CD8-positive, alpha-beta memory T cell (primary cell): ENCODE measurements at regions of chr7 and their contacts with region 1.

Region 1: DNA sequence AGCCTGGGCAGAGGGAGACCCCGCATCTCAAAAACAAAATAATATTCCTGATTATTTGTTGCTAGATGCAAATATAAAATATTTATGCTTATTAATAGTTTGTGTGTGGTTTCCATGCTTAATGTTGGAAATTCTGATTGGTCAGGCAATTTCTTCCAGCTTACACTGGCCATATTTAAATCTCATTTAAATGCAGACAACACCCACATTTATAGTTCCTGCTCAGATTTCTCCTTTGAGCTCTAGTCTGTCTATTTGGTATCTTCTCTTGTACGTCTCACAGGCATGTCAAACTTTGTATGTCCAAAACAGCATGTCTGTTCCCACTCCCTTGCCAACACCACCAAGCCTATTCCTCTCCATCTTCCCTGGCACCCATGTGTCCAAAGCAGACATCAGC is 52.5 kb downstream of the FKBP9 start:
- DNase-seq: no peak
- H3K4me3 ChIP-seq: no peak overlapping the region
- H3K4me3 Mint-ChIP-seq: no peak overlapping the region
- H3K27ac ChIP-seq: no peak overlapping the region
- H3K27ac Mint-ChIP-seq: peak overlapping the region in 3 of 8 donors; percentile 2 to 78 (median 41)
- H3K4me1 ChIP-seq: no peaks in the 10 kb centered on the region
- H3K4me1 Mint-ChIP-seq: no peaks in the 10 kb centered on the region
- H3K27me3 ChIP-seq: no peaks in the 10 kb centered on the region
- H3K27me3 Mint-ChIP-seq: peaks cover 0 to 1% of the 10 kb centered on the region in 2 donors

Region 2: DNA sequence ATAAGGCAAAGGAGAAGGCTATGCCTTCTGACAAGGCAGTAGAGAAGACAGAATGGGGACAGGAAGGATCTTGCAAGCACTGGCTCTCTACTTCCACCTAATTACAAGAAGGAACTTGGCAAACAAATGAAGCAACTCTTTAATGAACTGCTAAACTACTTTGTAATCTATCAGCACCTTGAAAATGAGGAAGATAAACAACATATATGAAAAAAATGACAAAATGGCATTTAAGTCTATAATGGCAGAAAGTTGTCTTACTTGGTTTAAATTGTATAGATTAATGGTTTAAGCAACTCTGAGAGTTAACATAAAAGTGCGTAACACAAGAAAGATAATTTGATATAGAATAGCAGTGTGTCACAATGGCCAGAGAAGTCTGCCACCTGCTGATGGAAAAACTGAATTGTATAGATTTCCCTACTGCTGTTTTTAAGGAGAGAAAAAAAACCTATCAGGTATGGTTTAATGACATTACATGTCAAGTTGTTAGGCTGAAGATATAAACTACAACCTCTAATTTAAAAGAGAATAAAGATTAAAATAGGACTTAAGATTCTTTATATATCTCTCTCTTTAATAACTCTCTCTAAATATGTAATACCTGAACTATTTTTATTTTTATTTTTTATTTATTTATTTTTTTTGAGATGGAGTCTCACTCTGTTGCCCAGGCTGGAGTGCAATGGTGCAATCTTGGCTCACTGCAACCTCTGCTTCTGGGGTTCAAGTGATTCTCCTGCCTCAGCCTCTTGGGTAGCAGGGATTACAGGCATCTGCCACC is 41.0 kb after region 1 on chr7:
- CTCF ChIA-PET with region 1: no interaction called
- POLR2A ChIA-PET with region 1: interaction called, 10 read pairs
- DNase-seq: peak in 2 of 5 donors; percentile 40 to 44
- H3K4me3 ChIP-seq: no peak overlapping the region
- H3K4me3 Mint-ChIP-seq: peak overlapping the region in 1 of 7 donors; percentile 29
- H3K27ac ChIP-seq: no peak overlapping the region
- H3K27ac Mint-ChIP-seq: peak overlapping the region in 3 of 8 donors; percentile 9 to 52 (median 15)
- H3K4me1 ChIP-seq: peaks cover 42% of the 10 kb centered on the region
- H3K4me1 Mint-ChIP-seq: peaks cover 42 to 74% (median 74%) of the 10 kb centered on the region in 3 donors
- H3K27me3 ChIP-seq: no peaks in the 10 kb centered on the region
- H3K27me3 Mint-ChIP-seq: no peaks in the 10 kb centered on the region